Natural killer cell (primary cell): ENCODE measurements at regions of chr2 and their contacts with region 1.

Region 1: GRCh38 chr2:218395797-218396687 is 3.6 kb upstream of the CTDSP1 start:
- DNase-seq: peak; percentile 90 to 97
- ATAC-seq: peak; percentile 62 to 82 (median 71)
- H3K4me3 ChIP-seq: peak overlapping the region; percentile 59
- H3K4me3 Mint-ChIP-seq: peak overlapping the region; percentile 94
- H3K27ac ChIP-seq: peak overlapping the region; percentile 83
- H3K27ac Mint-ChIP-seq: peak overlapping the region; percentile 98
- H3K4me1 ChIP-seq: peaks cover 62% of the 10 kb centered on the region
- H3K4me1 Mint-ChIP-seq: peaks cover 39 to 58% of the 10 kb centered on the region in 2 donors
- H3K27me3 ChIP-seq: no peaks in the 10 kb centered on the region
- H3K27me3 Mint-ChIP-seq: no peaks in the 10 kb centered on the region
- CTCF ChIP-seq: peak; percentile 80

Region 2: GRCh38 chr2:218292048-218293014 is 103.7 kb before region 1 on chr2 and contains the start of gene TMBIM1:
- intact Hi-C with region 1: loop called (anchors 2 kb)
- DNase-seq: peak; percentile 86 to 91
- ATAC-seq: peak; percentile 90 to 97 (median 95)
- H3K4me3 ChIP-seq: peak within 1 kb of the TSS; percentile 55
- H3K4me3 Mint-ChIP-seq: peak within 1 kb of the TSS; percentile 92
- H3K27ac ChIP-seq: peak within 1 kb of the TSS; percentile 86
- H3K27ac Mint-ChIP-seq: peak within 1 kb of the TSS; percentile 100
- H3K4me1 ChIP-seq: peaks cover 55% of the 10 kb centered on the region
- H3K4me1 Mint-ChIP-seq: peaks cover 44 to 61% of the 10 kb centered on the region in 2 donors
- H3K27me3 ChIP-seq: no peaks in the 10 kb centered on the region
- H3K27me3 Mint-ChIP-seq: no peaks in the 10 kb centered on the region
- CTCF ChIP-seq: peak; percentile 95
- total RNA-seq, gene TMBIM1: 84.9 to 107 (median 95.1) TPM

Region 3: DNA sequence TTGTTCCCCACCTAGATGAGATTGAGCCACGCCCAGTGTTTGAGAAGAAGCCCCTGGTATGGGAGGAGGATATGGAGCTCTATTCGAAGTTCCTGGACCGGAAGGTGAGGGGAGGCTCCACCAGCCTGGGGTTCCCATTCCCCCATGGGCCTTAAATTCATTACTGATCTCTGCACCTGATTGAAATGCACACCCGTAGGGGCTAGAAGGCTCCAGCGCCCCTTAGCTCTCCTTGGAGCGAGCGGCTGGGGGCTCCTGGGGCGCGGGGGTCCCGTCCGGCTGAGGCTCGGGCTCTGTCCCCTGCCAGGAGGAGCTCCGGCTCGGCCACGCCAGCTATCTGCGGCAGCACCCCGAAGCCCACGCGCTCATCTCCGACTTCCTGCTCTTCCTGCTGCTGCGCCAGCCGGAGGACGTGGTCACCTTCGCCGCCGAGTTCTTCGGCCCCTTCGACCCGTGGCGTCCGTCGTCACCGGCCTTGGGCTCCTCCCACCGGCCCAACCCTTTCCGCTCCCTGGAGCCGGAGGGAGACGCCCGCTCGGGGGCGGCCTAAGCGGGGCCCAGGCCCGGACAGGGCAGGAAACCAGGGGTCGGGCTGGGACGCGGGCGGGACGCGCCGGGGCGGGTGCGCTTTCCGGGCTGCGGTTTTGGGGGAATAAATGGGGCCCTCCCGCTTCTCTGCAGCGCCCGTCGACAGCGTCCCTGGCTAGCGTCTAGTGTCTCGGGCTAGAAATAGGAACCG is 28.5 kb before region 1 on chr2:
- intact Hi-C with region 1: loop called (anchors 2 kb)
- DNase-seq: peak; percentile 61 to 79
- ATAC-seq: peak; percentile 83 to 93 (median 87)
- H3K4me3 ChIP-seq: peak overlapping the region; percentile 57
- H3K4me3 Mint-ChIP-seq: peak overlapping the region; percentile 87
- H3K27ac ChIP-seq: peak overlapping the region; percentile 87
- H3K27ac Mint-ChIP-seq: peak overlapping the region; percentile 79 to 92
- H3K4me1 ChIP-seq: peaks cover 41% of the 10 kb centered on the region
- H3K4me1 Mint-ChIP-seq: peaks cover 12 to 14% of the 10 kb centered on the region in 2 donors
- H3K27me3 ChIP-seq: no peaks in the 10 kb centered on the region
- H3K27me3 Mint-ChIP-seq: no peaks in the 10 kb centered on the region
- CTCF ChIP-seq: no peak

Region 4: DNA sequence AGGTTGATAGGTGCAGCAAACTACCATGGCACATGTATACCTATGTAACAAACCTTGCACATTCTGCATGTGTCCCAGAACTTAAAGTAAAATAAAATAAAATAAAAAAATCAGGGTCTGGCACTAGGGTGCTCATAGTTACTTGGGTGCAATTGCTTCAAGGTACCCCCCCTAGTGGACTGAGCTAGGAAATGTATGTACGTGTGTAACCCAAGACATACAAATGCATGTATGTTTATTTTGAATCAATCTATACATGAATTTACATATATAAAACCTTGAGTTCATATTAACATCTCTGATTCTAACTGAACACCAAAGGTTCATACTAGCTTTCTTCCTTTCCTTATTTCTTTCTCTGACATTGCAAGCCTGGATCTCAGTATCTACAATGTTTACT is 120.6 kb after region 1 on chr2:
- intact Hi-C with region 1: loop called (anchors 5 kb)
- DNase-seq: peak in 1 of 2 donors; percentile 70
- ATAC-seq: peak; percentile 67 to 88 (median 81)
- H3K4me3 ChIP-seq: no peak overlapping the region
- H3K4me3 Mint-ChIP-seq: no peak overlapping the region
- H3K27ac ChIP-seq: no peak overlapping the region
- H3K27ac Mint-ChIP-seq: peak overlapping the region in 1 of 2 donors; percentile 20
- H3K4me1 ChIP-seq: no peaks in the 10 kb centered on the region
- H3K4me1 Mint-ChIP-seq: no peaks in the 10 kb centered on the region
- H3K27me3 ChIP-seq: no peaks in the 10 kb centered on the region
- H3K27me3 Mint-ChIP-seq: no peaks in the 10 kb centered on the region
- CTCF ChIP-seq: peak; percentile 77

Region 5: DNA sequence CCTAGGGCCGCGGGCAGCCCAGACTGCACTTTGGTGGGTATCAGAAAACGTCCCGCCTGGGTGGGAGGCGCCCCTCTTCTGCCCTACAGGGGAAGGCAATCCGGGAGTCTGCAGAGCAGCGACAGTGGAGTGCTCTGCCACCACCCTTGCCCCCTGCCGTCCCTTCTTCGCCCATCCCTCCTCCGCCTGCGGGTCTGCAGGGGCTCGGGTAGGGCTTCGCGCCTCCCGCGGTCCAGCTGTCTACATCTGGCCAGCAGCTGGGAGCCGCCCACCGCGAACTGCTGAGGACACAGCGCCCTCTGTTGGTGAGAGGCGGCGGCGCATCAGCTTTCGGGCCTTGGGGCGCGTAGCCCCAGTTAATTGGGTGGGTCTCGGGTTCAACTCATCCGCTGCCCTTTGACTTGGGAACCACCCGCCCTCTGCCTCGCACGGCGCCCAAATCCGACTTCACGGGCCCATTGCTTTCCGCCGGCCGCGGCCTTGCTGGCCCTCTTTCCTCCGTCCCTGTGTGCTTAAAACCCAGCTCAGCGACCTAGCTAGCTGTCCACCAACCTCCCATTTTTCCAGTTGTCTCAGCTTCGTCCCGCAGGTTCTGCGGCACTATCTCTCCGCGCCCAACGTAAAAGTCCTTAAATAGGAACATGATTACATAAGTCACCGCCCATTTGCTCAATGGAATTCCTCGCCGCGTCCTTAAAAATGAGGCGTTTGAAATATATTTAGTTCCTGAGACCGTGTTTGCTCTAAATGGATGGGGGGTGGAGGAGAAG is 502.3 kb after region 1 on chr2:
- intact Hi-C with region 1: loop called (anchors 5 kb)
- DNase-seq: peak; percentile 79 to 85
- ATAC-seq: peak; percentile 17 to 58 (median 24)
- H3K4me3 ChIP-seq: no peak overlapping the region
- H3K4me3 Mint-ChIP-seq: peak overlapping the region; percentile 81
- H3K27ac ChIP-seq: no peak overlapping the region
- H3K27ac Mint-ChIP-seq: peak overlapping the region; percentile 76 to 90
- H3K4me1 ChIP-seq: peaks cover 53% of the 10 kb centered on the region
- H3K4me1 Mint-ChIP-seq: peaks cover 42 to 46% of the 10 kb centered on the region in 2 donors
- H3K27me3 ChIP-seq: peaks cover 24% of the 10 kb centered on the region
- H3K27me3 Mint-ChIP-seq: peaks cover 54 to 60% of the 10 kb centered on the region in 2 donors
- CTCF ChIP-seq: peak; percentile 100